ENCODE measurements at regions of chr22 and their contacts with region 1.

Region 1: DNA sequence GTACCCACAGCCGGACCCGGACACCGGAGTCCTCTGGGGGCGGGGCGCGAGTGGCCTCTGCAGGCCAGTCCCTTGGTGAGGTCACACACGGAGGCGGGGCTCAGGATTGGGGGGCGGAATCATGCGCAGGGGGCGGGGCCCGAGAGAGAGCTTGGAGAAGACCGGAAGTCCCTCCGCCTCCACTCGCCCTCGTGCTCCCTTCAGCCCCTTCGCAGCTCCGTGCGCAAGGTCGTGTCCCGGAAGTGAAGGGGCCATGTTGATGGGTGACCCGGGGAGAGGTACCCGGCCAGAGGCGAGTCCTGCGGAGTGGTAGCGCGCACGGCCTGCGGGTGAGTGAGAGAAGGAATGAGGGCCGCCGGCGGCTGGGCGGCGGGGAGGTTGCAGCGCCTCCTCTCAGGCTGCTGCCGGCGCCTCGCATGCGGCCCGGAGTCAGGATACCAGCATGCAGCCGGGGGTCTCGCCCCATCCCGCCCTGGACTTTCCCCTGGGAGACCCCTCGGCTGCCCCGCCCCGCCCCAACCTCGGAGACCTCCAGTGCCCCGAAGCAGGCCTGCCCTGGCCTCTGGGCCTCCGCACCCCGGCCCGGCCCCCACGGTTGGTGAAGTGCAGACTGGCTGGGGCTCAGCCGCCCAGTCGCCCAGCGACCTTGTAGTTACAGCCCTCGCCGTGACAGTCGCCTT is at the start of gene MIEF1:
- DNase-seq: peak; percentile 98
- ATAC-seq: peak; percentile 95 to 98 (median 98)
- H3K4me3 ChIP-seq: peak within 1 kb of the TSS; percentile 73 to 99 (median 92)
- H3K27ac ChIP-seq: peak within 1 kb of the TSS; percentile 42 to 94 (median 91)
- H3K4me1 ChIP-seq: peaks cover 26 to 76% (median 54%) of the 10 kb centered on the region in 9 donors
- H3K27me3 ChIP-seq: no peaks in the 10 kb centered on the region
- CTCF ChIP-seq: peak in 1 of 9 donors; percentile 17
- total RNA-seq, gene MIEF1: 12.8 to 35.8 (median 17.5) TPM

Region 2: DNA sequence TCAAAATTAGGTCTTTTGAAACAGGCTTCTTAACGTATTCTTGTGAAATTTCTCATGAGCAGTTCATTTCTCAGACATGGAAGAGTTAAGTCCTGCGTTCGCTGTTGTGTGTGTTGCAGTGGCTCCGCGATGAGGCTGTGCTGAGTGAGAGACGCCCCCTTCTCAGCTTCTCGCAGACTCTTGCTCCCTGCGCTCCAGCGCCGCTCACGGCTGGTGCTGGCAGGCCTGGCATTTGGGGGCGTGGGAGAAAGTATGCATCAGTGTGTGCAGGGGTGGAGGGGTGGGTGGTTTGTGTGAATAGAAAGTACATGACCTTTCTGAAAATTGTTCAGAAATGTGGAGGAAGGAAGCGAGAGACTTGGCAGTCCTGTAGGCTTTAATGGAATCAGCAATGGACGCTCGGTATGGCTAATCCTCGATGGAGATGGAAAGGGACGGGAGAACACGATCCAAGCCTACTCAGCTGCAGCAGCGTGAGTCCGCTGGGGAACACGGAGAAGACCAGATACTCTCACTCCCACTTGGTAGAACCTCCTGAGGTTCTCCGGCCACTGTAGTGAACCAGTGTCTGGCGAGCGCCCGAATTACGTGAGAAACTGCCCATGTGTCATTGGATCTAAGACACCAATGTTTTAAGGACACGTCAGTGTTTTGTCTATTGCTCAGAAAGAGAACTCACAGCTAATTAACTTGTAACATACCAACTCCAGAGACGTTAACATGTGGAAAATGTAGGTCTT is 96.7 kb before region 1 on chr22:
- intact Hi-C with region 1: loop called in 1 of 10 experiments (anchors 10 kb)
- DNase-seq: no peak
- ATAC-seq: peak in 6 of 8 donors; percentile 47 to 66 (median 59)
- H3K4me3 ChIP-seq: peak overlapping the region in 4 of 10 donors; percentile 5 to 33 (median 20)
- H3K27ac ChIP-seq: peak overlapping the region in 4 of 10 donors; percentile 32 to 41 (median 37)
- H3K4me1 ChIP-seq: peaks cover 0 to 48% (median 20%) of the 10 kb centered on the region in 9 donors
- H3K27me3 ChIP-seq: no peaks in the 10 kb centered on the region
- CTCF ChIP-seq: peak in 1 of 9 donors; percentile 11